AG04449 (cell line): ENCODE measurements at regions of chr6 and their contacts with region 1.

Region 1: DNA sequence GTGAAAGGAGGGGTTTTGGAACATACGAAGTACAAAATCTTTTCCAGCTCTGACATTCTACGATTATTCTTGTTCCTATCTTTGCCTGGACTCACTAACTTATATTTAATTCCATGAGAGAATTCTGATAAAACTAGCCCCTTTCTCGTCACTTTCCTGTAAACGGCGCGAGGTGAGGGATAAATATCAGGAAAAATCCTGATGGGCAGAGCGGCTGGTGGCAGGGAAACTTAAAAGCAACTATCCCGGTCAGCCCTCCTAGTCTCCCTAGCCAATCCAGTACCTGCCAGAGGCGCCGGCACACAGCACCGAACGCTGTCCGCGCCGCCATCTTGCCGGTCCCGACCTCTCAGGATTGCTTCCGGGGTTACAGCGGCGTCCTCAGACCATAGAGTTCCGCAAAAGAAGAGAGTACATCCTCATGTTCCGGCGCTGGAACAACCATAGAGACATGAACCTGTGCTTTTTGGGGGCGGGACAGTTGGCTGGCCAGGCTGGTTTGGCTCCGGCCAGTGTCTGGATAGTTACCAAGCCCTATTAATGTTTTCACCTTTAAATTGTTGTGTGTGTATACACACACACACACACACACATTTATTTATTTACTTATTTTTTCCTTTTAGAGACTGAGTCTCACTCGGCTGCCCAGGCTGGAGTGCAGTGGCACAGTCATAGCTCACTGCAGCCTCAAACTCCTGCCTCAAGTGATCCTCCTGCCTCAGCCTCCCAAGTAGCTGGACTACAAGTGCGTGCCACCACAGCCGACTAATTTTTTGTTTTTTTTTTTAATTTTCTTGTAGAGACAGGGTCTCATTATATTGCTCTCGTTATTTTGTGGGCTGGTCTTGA is at the start of gene MRPS10:
- DNase-seq: peak; percentile 70
- H3K4me3 ChIP-seq: peak within 1 kb of the TSS; percentile 83
- CTCF ChIP-seq: no peak

Region 2: GRCh38 chr6:42075159-42075838 is 142.4 kb before region 1 on chr6:
- CTCF ChIA-PET with region 1: interaction called, 178 read pairs
- POLR2A ChIA-PET with region 1: no interaction called
- DNase-seq: no peak
- H3K4me3 ChIP-seq: no peak overlapping the region
- CTCF ChIP-seq: peak; percentile 79

Region 3: DNA sequence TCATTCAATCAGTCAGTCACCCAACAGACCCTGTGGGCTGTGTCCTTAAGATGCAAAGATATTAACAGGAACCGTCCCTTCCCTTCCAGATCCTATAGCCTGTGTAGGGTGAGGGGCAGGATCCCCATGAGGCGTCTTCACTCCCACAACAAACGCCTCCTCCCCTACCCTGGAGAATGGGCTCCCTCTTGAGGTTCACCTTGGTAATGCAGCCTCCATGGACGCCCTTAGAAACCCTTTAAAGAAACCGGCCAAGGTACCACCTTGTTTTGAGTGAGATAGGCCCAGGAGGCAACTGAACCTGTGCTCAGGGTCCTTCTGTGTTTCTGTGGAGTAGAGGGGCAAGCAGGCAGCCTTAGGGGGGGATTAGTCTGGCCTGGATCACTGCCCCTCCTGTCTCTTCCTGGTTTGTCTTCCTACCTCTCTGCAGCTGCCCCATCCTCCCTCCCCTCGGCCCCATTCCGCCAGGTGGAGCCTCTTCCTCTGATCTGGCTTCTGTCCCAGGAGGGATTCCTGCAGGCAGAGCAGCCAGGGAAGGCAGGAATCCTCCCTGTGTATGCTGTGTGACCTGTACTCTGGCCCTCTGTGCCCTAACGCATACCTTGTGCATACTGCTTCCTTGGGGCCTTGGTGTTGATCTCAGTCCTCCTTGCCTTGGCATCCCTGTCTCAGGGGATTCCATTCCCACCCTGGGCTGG is 51.1 kb before region 1 on chr6:
- CTCF ChIA-PET with region 1: interaction called, 71 read pairs
- POLR2A ChIA-PET with region 1: interaction called, 3 read pairs
- DNase-seq: no peak
- H3K4me3 ChIP-seq: no peak overlapping the region
- CTCF ChIP-seq: peak; percentile 91

Region 4: DNA sequence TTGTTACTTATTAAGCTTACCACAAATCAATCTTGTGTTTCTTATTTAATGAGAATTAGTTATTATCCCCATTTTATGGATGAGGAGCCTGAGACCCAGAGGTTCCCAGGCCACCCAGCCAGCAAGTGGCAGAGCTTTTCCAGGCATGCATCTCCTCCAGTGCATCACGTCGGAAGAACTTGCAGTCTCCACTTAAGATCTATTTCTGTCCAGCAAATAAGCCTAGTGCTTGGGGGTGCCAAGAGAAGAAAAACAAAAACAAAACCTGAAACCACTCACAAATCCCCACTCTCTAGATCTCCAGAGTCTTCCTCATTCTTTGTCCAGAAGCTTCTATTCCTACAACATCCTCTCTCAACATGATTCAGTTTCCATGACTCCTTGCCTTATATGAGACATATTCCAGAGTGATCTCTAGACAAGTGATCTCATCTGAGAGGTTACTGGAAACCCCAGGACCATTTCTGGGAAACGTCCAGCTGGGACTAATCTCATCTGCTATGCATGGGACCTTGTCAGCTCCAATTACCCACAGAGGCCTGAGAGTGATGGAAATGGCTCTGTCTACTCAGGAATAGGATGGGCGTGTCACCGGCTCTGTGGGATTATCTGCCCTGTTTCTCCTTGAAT is 27.1 kb before region 1 on chr6:
- CTCF ChIA-PET with region 1: interaction called, 11 read pairs
- POLR2A ChIA-PET with region 1: no interaction called
- DNase-seq: peak; percentile 51
- H3K4me3 ChIP-seq: no peak overlapping the region
- CTCF ChIP-seq: no peak

Region 5: GRCh38 chr6:42453031-42453653 is 235.4 kb after region 1 on chr6:
- CTCF ChIA-PET with region 1: interaction called, 14 read pairs
- POLR2A ChIA-PET with region 1: no interaction called
- DNase-seq: no peak
- H3K4me3 ChIP-seq: peak overlapping the region; percentile 74
- CTCF ChIP-seq: peak; percentile 10